Activated T-helper 1 cell treated with anti-CD3 and anti-CD28 coated beads, Interleukin-12 subunit alpha, Interleukin-12 subunit beta, Interleukin-2, Interleukin-4 antibody, amounts not matched to agents 30 ng/mL and 10 ng/mL and 1 ng/mL, durations not matched to agents 14 hours and 24 hours and 36 hours (primary cell): ENCODE measurements at regions of chr16 and their contacts with region 1.

Region 1: DNA sequence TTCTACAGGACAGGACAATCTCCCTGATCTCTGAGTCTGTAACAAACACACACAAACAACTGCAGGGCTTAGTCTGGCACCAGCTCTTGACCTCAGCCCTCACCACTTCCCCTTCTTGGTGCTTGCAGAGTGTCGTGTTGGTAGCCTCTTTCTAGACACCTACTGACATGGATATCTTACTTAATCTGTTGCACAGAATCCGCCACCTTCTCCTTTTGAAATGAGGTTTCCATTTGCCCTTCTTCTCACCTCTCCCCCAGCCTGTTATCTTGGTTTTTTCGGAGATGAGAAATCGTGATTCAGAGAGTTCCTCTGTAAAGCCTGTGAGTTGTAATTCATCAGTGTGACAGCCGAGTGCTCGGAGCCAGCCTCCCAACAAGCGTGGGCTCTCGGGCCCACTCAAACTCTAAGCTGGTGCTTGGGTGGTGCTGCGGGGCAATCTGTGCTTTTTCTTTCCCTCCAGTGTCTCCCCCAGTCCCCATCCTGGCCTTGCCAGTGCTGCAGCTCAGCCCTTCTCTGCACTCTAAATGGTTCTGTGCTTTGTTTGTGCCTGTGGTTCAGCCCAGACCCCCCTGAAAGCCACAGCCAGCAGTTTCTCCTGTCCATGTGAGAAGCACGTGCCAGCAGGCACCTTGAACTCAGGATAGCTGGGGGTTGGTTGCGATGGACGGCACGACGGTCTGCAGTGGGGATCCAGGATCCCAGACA is 28.1 kb downstream of the KIAA0513 start:
- DNase-seq: peak; percentile 75
- H3K4me3 Mint-ChIP-seq: peak overlapping the region; percentile 60
- H3K27ac Mint-ChIP-seq: peak overlapping the region; percentile 84
- H3K4me1 Mint-ChIP-seq: peaks cover 31% of the 10 kb centered on the region
- H3K27me3 Mint-ChIP-seq: peaks cover 10% of the 10 kb centered on the region

Region 2: GRCh38 chr16:85086347-85087291 is 31.0 kb after region 1 on chr16:
- intact Hi-C with region 1: loop called (anchors 1 kb)
- DNase-seq: peak; percentile 64
- H3K4me3 Mint-ChIP-seq: no peak overlapping the region
- H3K27ac Mint-ChIP-seq: no peak overlapping the region
- H3K4me1 Mint-ChIP-seq: peaks cover 7% of the 10 kb centered on the region
- H3K27me3 Mint-ChIP-seq: no peaks in the 10 kb centered on the region